AG04450 (cell line): ENCODE measurements at regions of chr22 and their contacts with region 1.

Region 1: GRCh38 chr22:29625090-29625825 is 21.8 kb downstream of the NF2 start:
- DNase-seq: no peak
- H3K4me3 ChIP-seq: no peak overlapping the region
- H3K27ac ChIP-seq: peak overlapping the region; percentile 53
- H3K27me3 ChIP-seq: no peaks in the 10 kb centered on the region
- CTCF ChIP-seq: peak; percentile 91

Region 2: GRCh38 chr22:29606320-29606719 is 18.9 kb before region 1 on chr22:
- CTCF ChIA-PET with region 1: interaction called, 13 read pairs
- POLR2A ChIA-PET with region 1: interaction called, 5 read pairs
- DNase-seq: no peak
- H3K4me3 ChIP-seq: no peak overlapping the region
- H3K27ac ChIP-seq: no peak overlapping the region
- H3K27me3 ChIP-seq: no peaks in the 10 kb centered on the region
- CTCF ChIP-seq: no peak

Region 3: GRCh38 chr22:29635734-29636357 is 10.6 kb after region 1 on chr22:
- CTCF ChIA-PET with region 1: interaction called, 29 read pairs
- POLR2A ChIA-PET with region 1: no interaction called
- DNase-seq: no peak
- H3K4me3 ChIP-seq: no peak overlapping the region
- H3K27ac ChIP-seq: no peak overlapping the region
- H3K27me3 ChIP-seq: no peaks in the 10 kb centered on the region
- CTCF ChIP-seq: peak; percentile 76